Activated CD4-positive, alpha-beta memory T cell treated with anti-CD3 and anti-CD28 coated beads for 36 hours (primary cell): ENCODE measurements at regions of chr19 and their contacts with region 1.

Region 1: DNA sequence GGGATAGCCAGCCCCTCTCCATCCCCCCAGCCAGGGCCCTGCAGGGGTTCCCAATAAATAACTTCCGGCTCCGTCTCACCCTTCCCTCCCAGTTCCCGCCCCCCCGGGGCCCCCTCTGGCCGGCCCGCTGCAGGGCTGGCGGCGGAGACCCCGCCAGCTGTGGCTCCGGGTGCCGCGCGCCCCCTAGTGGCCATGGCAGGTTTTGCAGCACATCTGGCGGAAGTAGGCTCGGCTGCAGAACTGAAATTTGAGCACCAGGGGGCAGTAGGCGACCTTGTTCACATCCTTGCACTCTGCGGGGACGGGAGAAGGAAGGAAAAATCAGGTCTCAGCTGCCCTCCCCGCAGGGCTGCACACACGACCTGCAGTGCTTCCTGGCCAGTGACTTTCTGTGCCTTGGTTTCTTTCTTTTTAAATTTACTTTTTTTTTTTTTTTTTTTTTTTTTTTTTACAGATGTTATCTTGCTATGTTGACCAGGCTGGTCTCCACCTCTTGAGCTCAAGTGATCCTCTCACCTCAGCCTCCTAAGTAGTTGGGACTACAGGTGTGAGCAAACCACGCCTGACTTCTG is 3.6 kb upstream of the MYO1F start:
- DNase-seq: peak; percentile 90
- H3K4me3 Mint-ChIP-seq: no peak overlapping the region
- H3K27ac Mint-ChIP-seq: no peak overlapping the region
- H3K4me1 Mint-ChIP-seq: peaks cover 29% of the 10 kb centered on the region
- H3K27me3 Mint-ChIP-seq: peaks cover 2% of the 10 kb centered on the region

Region 2: DNA sequence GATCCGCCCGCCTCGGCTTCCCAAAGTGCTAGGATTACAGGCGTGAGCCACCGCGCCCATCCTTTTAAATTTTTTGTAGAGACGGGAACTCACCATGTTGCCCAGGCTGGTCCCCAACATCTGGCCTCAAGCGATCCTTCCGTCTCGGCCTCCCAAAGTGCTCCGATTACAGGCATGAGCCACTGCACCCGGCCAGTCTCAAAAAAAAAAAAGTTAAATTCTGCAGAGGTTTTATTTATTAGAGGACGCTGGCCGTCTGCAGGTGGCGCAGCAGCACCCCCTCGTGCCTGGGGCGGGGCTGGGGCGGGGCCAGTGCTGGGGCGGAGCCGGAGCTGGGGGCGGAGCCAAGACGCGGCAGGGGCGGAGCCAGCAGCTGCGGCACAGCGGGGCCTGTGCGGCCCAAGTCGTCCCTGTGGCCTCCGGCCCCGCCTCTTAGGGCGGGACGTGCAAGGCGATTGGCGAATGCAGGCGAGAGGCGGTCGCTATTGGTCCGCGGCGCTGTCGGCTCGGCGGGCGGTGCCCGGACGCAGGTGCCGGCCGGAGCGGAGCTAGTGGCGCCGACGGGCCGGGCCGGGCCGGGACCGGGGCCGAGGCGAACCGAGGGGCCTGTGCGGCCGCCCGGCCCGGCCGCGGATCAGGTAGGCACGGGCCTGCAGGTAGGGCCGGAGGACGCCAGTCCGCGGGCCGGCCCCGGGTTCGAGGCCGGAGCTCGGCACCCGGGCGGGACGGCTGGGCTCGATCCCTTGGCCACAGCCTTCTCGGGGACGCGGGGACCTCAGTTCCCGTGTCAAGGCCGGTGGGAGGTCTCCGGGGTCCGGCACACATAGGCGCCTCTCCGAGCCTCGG is 167.8 kb before region 1 on chr19 and contains the start of gene MARCHF2:
- CTCF ChIA-PET with region 1: interaction called, 84 read pairs
- POLR2A ChIA-PET with region 1: no interaction called
- intact Hi-C with region 1: loop called (anchors 2 kb)
- DNase-seq: peak; percentile 98
- H3K4me3 Mint-ChIP-seq: peak within 1 kb of the TSS; percentile 67
- H3K27ac Mint-ChIP-seq: no peak within 1 kb of the TSS
- H3K4me1 Mint-ChIP-seq: peaks cover 11% of the 10 kb centered on the region
- H3K27me3 Mint-ChIP-seq: no peaks in the 10 kb centered on the region
- total RNA-seq, gene MARCHF2: 14.5 to 16.0 TPM

Region 3: DNA sequence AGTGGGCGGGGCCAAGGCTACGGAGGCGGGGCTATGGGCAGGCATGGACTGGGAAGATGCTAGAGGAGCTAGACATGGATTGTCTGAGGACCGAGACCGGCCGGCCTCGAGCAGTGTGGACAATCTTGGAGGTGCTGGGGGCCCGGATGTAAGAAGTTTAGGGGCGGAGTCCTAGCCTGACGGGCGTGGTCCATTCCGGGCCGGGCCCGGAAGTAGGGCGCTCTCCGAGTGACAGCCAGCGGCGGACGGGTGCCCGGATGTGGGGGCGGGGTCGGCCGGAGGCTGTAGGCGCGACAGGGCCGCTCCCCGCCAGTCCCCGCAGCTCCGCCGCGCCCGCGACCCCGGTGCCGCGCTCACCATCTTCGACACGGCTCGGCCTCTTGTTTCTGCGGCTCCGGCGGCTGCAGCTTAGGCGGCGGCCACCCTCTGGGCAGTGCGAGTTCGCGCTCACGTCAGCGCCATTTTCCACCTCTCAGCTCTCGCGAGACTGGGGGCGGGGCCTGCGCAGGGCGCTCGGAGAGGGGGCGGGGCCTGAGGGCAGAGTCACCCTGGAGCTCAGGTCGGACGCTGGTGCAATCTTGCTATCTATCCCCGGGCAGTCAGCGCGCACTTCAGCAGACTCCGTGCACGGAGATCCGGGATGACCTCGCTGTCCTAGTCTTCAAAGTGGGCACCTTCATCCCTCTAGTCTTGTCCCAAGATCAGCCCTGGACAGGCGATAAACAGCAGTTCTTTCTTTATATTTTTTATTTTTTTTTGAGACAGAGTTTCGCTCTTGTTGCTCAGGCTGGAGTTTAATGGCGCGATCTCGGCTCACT is 66.9 kb before region 1 on chr19 and contains the start of gene ZNF414:
- CTCF ChIA-PET with region 1: interaction called, 93 read pairs
- POLR2A ChIA-PET with region 1: interaction called, 23 read pairs
- intact Hi-C with region 1: loop called (anchors 2 kb)
- DNase-seq: peak; percentile 98
- H3K4me3 Mint-ChIP-seq: peak within 1 kb of the TSS; percentile 92
- H3K27ac Mint-ChIP-seq: peak within 1 kb of the TSS; percentile 99
- H3K4me1 Mint-ChIP-seq: peaks cover 49% of the 10 kb centered on the region
- H3K27me3 Mint-ChIP-seq: no peaks in the 10 kb centered on the region
- total RNA-seq, gene ZNF414: 19.7 to 24.6 TPM

Region 4: DNA sequence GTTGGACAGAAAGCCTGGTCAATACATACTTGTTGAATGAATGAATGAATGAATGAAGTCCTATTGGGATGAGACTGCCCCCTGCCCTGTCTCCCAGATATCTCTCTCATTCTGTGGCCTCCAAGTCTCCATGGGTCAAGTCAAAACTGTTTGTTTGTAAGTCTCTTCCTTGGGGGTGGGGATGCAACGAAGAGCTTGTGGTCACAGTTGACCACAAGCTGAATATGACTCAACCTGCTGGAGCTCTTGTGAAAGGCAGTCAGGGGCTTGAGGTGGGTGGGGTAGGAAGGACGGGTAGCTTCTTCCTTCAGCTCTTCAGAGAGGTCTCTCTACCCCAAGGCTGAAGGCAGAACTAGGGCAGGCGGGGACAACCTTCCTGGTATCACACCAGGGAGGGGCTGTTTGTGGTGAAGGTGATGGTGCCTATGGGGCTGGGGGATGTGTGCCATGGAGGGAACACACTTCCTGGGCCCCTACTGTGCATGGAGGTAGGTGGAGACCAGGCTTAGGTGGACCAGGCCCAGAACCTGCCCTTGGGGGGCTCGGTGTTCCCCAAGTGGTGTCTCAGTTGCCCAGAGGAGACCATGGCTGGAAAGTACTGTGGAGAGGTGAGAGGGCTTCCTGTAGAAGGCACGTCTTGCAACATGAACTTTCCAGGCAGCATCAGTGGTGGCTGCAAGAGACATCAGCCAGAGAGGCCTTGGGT is 11.6 kb before region 1 on chr19:
- CTCF ChIA-PET with region 1: interaction called, 168 read pairs
- POLR2A ChIA-PET with region 1: interaction called, 7 read pairs
- intact Hi-C with region 1: loop called (anchors 1 kb)
- DNase-seq: peak; percentile 83
- H3K4me3 Mint-ChIP-seq: peak overlapping the region; percentile 52
- H3K27ac Mint-ChIP-seq: peak overlapping the region; percentile 94
- H3K4me1 Mint-ChIP-seq: peaks cover 66% of the 10 kb centered on the region
- H3K27me3 Mint-ChIP-seq: no peaks in the 10 kb centered on the region

Region 5: GRCh38 chr19:8641908-8642547 is 61.2 kb after region 1 on chr19:
- CTCF ChIA-PET with region 1: interaction called, 18 read pairs
- POLR2A ChIA-PET with region 1: no interaction called
- intact Hi-C with region 1: no loop called
- DNase-seq: no peak
- H3K4me3 Mint-ChIP-seq: no peak overlapping the region
- H3K27ac Mint-ChIP-seq: no peak overlapping the region
- H3K4me1 Mint-ChIP-seq: peaks cover 3% of the 10 kb centered on the region
- H3K27me3 Mint-ChIP-seq: peaks cover 24% of the 10 kb centered on the region